PC-3 (cell line): ENCODE measurements at regions of chr9 and their contacts with region 1.

Region 1: GRCh38 chr9:33623658-33624586 is 99.9 kb downstream of the ANKRD18B start:
- DNase-seq: peak; percentile 88
- ATAC-seq: peak; percentile 86
- H3K4me3 ChIP-seq: no peak overlapping the region
- H3K27ac ChIP-seq: no peak overlapping the region
- H3K4me1 ChIP-seq: peaks cover 24% of the 10 kb centered on the region
- H3K27me3 ChIP-seq: no peaks in the 10 kb centered on the region
- CTCF ChIP-seq: peak; percentile 73

Region 2: GRCh38 chr9:33524306-33524947 is 99.5 kb before region 1 on chr9:
- CTCF ChIA-PET with region 1: interaction called, 4 read pairs
- POLR2A ChIA-PET with region 1: interaction called, 17 read pairs
- intact Hi-C with region 1: no loop called
- DNase-seq: peak; percentile 17
- ATAC-seq: peak; percentile 39
- H3K4me3 ChIP-seq: peak overlapping the region; percentile 77
- H3K27ac ChIP-seq: no peak overlapping the region; the same call in 1 of the 2 replicates
- H3K4me1 ChIP-seq: no peaks in the 10 kb centered on the region; the same call in 1 of the 2 replicates
- H3K27me3 ChIP-seq: no peaks in the 10 kb centered on the region
- CTCF ChIP-seq: no peak

Region 3: GRCh38 chr9:33638391-33638915 is 14.5 kb after region 1 on chr9:
- CTCF ChIA-PET with region 1: no interaction called
- POLR2A ChIA-PET with region 1: no interaction called
- intact Hi-C with region 1: no loop called
- DNase-seq: no peak
- ATAC-seq: no peak
- H3K4me3 ChIP-seq: no peak overlapping the region
- H3K27ac ChIP-seq: no peak overlapping the region
- H3K4me1 ChIP-seq: no peaks in the 10 kb centered on the region
- H3K27me3 ChIP-seq: peaks cover 58% of the 10 kb centered on the region
- CTCF ChIP-seq: no peak